ENCODE measurements at regions of chr11 and their contacts with region 1.

Region 1: GRCh38 chr11:34890812-34891211 is 25.4 kb downstream of the APIP start:
- DNase-seq: peak in 1 of 2 experiments; percentile 27
- H3K4me3 ChIP-seq: no peak overlapping the region
- H3K4me3 Mint-ChIP-seq: no peak overlapping the region
- H3K27ac Mint-ChIP-seq: no peak overlapping the region
- H3K4me1 ChIP-seq: no peaks in the 10 kb centered on the region
- H3K4me1 Mint-ChIP-seq: peaks cover 8% of the 10 kb centered on the region
- H3K27me3 ChIP-seq: no peaks in the 10 kb centered on the region
- H3K27me3 Mint-ChIP-seq: no peaks in the 10 kb centered on the region
- CTCF ChIP-seq: peak; percentile 37 to 42

Region 2: GRCh38 chr11:34512840-34513681 is 377.8 kb before region 1 on chr11:
- CTCF ChIA-PET with region 1: interaction called, 4 read pairs
- POLR2A ChIA-PET with region 1: no interaction called
- intact Hi-C with region 1: loop called (anchors 1 kb)
- DNase-seq: peak; percentile 67 to 75
- H3K4me3 ChIP-seq: no peak overlapping the region
- H3K4me3 Mint-ChIP-seq: peak overlapping the region; percentile 9
- H3K27ac Mint-ChIP-seq: no peak overlapping the region
- H3K4me1 ChIP-seq: peaks cover 17% of the 10 kb centered on the region
- H3K4me1 Mint-ChIP-seq: peaks cover 11% of the 10 kb centered on the region
- H3K27me3 ChIP-seq: no peaks in the 10 kb centered on the region
- H3K27me3 Mint-ChIP-seq: peaks cover 1% of the 10 kb centered on the region
- CTCF ChIP-seq: peak; percentile 78 to 92

Region 3: GRCh38 chr11:34585735-34586487 is 304.9 kb before region 1 on chr11:
- CTCF ChIA-PET with region 1: interaction called, 3 read pairs
- POLR2A ChIA-PET with region 1: no interaction called
- intact Hi-C with region 1: loop called (anchors 1 kb)
- DNase-seq: peak in 1 of 2 experiments; percentile 55
- H3K4me3 ChIP-seq: no peak overlapping the region
- H3K4me3 Mint-ChIP-seq: peak overlapping the region; percentile 39
- H3K27ac Mint-ChIP-seq: peak overlapping the region; percentile 61
- H3K4me1 ChIP-seq: peaks cover 28% of the 10 kb centered on the region
- H3K4me1 Mint-ChIP-seq: peaks cover 30% of the 10 kb centered on the region
- H3K27me3 ChIP-seq: 0 out of 2 replicates have a peak, but pooled peaks cover 1% of the 10 kb centered on the region
- H3K27me3 Mint-ChIP-seq: no peaks in the 10 kb centered on the region
- CTCF ChIP-seq: peak; percentile 37 to 81

Region 4: GRCh38 chr11:34640050-34640923 is 250.5 kb before region 1 on chr11:
- CTCF ChIA-PET with region 1: no interaction called
- POLR2A ChIA-PET with region 1: no interaction called
- intact Hi-C with region 1: loop called (anchors 5 kb)
- DNase-seq: peak; percentile 91 to 96
- H3K4me3 ChIP-seq: no peak overlapping the region
- H3K4me3 Mint-ChIP-seq: peak overlapping the region; percentile 55
- H3K27ac Mint-ChIP-seq: peak overlapping the region; percentile 66
- H3K4me1 ChIP-seq: peaks cover 58% of the 10 kb centered on the region
- H3K4me1 Mint-ChIP-seq: peaks cover 62% of the 10 kb centered on the region
- H3K27me3 ChIP-seq: no peaks in the 10 kb centered on the region
- H3K27me3 Mint-ChIP-seq: no peaks in the 10 kb centered on the region
- CTCF ChIP-seq: no peak

Region 5: DNA sequence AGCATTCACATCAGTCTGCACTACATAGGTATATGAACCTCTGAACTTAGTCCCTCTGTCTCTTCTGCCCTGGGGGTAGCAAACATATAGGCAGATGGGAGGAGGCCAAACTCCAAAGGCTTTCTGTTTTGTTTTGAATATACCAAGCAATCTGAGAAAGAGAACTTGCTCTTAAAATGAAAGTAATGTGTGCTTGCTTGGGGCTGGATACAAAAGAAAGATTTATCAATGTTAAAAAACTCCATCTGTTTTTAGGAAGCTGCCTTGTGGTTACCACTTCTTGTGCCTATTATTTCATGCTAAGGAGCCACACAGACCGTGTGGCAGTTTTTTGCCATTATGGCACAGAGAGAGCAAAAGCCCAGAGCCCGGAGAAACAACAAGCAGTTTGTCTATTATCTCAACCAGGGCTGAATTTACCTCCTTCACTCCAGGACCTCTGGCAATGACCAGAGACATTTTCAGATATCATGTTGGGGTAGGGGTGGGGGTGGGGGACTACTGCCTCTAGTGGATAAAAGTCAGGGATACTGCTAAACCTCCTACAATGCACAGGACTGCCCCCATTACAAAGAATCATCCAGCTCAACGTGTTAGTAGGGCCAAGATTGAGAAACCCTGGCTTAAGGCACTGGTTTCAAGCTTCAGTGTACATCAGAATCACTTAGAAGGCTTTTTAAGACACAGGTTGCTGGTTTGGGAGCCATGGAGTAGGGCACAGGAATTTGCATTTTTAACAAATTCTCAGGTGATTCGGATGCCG is 98.9 kb before region 1 on chr11:
- CTCF ChIA-PET with region 1: no interaction called
- POLR2A ChIA-PET with region 1: no interaction called
- intact Hi-C with region 1: loop called (anchors 5 kb)
- DNase-seq: no peak
- H3K4me3 ChIP-seq: no peak overlapping the region
- H3K4me3 Mint-ChIP-seq: no peak overlapping the region
- H3K27ac Mint-ChIP-seq: no peak overlapping the region
- H3K4me1 ChIP-seq: no peaks in the 10 kb centered on the region
- H3K4me1 Mint-ChIP-seq: no peaks in the 10 kb centered on the region
- H3K27me3 ChIP-seq: no peaks in the 10 kb centered on the region
- H3K27me3 Mint-ChIP-seq: no peaks in the 10 kb centered on the region
- CTCF ChIP-seq: no peak

Region 6: DNA sequence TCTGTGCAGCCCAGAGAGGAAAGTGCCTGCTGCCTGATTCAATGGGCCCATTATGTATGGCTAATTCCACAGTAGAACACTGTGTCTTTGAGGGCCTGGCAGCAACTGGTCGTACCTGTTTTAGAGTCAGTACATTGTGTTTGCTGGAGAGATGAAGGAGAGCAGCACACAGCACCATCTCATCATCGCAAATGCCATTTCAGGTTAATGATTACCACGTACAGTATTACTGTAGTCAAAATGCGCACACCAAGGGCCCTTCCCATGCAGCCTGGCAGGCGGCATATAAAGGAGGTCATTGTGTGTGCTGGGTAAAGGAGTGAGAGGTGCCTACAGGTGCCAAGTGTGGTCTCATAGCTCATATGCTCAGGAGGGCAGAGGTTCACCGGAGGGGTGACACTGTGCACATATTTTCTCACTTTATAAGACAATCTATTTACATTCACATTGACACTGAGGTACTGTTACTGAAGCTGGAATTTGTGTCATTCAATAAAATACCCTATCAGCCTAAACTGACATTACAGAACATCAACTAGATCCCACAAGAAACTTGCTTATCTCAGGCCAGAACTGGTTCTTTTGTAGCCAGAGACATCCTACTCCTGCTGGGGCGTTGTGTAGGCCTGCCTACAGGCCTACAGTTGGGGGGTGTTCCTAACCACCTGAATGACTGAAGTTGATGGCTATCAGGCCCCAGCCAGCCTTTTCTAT is 65.0 kb before region 1 on chr11:
- CTCF ChIA-PET with region 1: no interaction called
- POLR2A ChIA-PET with region 1: no interaction called
- intact Hi-C with region 1: loop called (anchors 5 kb)
- DNase-seq: peak; percentile 65 to 78
- H3K4me3 ChIP-seq: no peak overlapping the region
- H3K4me3 Mint-ChIP-seq: peak overlapping the region; percentile 33
- H3K27ac Mint-ChIP-seq: peak overlapping the region; percentile 48
- H3K4me1 ChIP-seq: peaks cover 21% of the 10 kb centered on the region
- H3K4me1 Mint-ChIP-seq: peaks cover 15% of the 10 kb centered on the region
- H3K27me3 ChIP-seq: no peaks in the 10 kb centered on the region
- H3K27me3 Mint-ChIP-seq: no peaks in the 10 kb centered on the region
- CTCF ChIP-seq: no peak

Region 7: GRCh38 chr11:34840736-34841386 is 50.0 kb before region 1 on chr11:
- CTCF ChIA-PET with region 1: no interaction called
- POLR2A ChIA-PET with region 1: no interaction called
- intact Hi-C with region 1: loop called (anchors 5 kb)
- DNase-seq: peak in 1 of 2 experiments; percentile 33
- H3K4me3 ChIP-seq: no peak overlapping the region
- H3K4me3 Mint-ChIP-seq: no peak overlapping the region
- H3K27ac Mint-ChIP-seq: no peak overlapping the region
- H3K4me1 ChIP-seq: no peaks in the 10 kb centered on the region
- H3K4me1 Mint-ChIP-seq: no peaks in the 10 kb centered on the region
- H3K27me3 ChIP-seq: no peaks in the 10 kb centered on the region
- H3K27me3 Mint-ChIP-seq: no peaks in the 10 kb centered on the region
- CTCF ChIP-seq: peak; percentile 23 to 29

Region 8: DNA sequence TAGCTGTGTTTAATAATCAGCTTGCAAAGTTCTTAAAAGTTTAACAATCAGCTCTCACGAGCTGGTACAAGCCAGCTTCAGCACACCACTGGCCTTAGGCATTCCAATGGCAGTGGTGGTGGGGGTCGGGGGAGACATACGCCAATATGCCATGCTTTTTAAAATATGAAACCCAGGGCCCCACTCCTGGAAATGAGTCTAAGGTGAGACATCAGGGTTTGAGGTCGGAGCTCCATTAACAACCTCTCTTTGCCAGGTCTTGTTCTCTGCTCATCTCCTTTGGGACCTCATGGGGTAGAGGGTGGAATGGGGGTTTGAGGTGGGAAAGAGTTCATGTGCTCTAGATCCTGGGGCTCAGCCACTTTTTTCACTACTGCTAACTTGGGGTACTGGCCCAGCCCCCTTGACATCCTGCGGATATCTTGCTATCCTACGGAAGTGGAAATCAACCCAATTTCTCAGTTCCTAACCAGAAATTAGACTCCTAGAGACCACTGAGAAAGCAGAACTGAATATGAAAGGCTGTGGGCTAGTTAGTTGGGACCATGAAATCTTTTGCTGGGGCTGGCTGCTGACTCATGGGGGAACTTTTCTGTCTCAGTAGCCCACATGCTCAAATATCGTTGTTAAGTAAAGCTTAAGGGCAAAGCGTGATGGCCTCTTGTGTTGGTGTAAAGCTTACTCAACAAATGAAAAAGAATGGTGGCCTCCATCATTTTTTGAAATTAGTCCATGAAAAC is 115.7 kb after region 1 on chr11:
- CTCF ChIA-PET with region 1: no interaction called
- POLR2A ChIA-PET with region 1: no interaction called
- intact Hi-C with region 1: no loop called
- DNase-seq: no peak
- H3K4me3 ChIP-seq: no peak overlapping the region
- H3K4me3 Mint-ChIP-seq: no peak overlapping the region
- H3K27ac Mint-ChIP-seq: no peak overlapping the region
- H3K4me1 ChIP-seq: peaks cover 38% of the 10 kb centered on the region
- H3K4me1 Mint-ChIP-seq: peaks cover 19% of the 10 kb centered on the region
- H3K27me3 ChIP-seq: no peaks in the 10 kb centered on the region
- H3K27me3 Mint-ChIP-seq: no peaks in the 10 kb centered on the region
- CTCF ChIP-seq: no peak

Measured in Caco-2 (cell line).